Posterior vena cava (tissue), 2 donors: ENCODE measurements at regions of chr10 and their contacts with region 1.

Region 1: DNA sequence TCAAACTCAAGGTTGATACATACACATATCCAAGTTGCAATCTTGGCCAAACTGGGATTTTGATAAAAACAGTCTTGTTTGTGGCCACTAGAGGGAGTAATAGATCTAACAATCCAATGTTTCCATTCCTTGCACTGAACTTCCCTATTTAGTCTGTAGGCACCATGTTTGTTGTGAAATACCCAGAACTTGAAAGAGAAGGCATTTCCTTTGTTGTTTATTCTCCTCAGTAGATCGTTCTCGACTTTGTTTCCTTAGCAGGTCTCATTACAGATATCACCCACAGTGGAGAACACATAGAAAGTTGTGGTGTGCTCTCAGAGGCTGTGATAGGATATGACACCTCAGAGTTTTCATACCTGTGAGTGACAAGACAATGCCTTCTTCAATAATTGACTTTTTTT is 70.3 kb upstream of the MXI1 start:
- DNase-seq: no peak

Region 2: DNA sequence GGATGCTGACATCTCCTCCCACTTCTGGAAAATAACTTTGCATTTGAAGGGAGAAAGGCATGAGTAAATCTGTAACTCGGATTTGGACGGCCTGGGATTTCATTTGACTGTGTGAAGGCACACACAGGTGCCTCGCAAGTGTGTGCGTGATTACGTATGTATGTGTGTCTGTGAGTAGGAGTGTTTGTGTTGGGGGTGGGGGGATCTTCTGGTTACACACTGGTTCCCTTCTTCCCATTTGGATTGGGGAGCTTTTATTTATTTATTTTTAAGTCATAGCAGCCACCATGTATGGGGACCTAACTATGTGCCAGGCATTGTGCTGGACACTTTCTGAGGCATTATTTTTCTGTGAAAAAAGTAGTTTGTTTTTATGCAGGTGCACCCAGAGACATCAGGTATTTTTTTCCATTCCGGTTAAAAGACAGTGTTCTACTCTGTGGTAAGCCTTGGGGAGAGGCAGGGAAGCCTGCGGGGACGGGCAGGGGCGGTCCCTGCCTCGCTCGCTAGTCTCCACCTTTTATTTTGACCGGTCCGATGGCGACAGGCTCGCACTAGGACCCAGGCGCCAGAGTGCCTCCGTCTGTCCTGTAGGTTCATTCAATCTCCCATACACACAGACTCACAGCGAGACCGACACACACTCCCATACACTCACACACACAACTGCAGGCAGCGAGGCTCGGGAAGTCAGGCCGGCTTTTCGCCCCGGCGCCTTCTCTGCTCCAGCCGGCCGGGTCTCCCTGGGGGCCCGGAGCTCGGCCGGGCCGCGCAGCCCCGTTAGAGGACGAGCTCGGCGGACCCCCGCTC is 70.1 kb after region 1 on chr10 and contains the start of gene MXI1:
- intact Hi-C with region 1: loop called (anchors 5 to 10 kb)
- DNase-seq: peak; percentile 88
- total RNA-seq, gene MXI1: 45.5 to 51.9 TPM

Region 3: GRCh38 chr10:110225756-110226542 is 88.8 kb after region 1 on chr10:
- intact Hi-C with region 1: loop called in 1 of 2 experiments (anchors 2 kb)
- DNase-seq: peak; percentile 97

Region 4: GRCh38 chr10:110279407-110279986 is 142.4 kb after region 1 on chr10:
- intact Hi-C with region 1: loop called (anchors 2 to 5 kb)
- DNase-seq: no peak